Activated CD4-positive, alpha-beta T cell treated with anti-CD3 and anti-CD28 coated beads for 36 hours (primary cell): ENCODE measurements at regions of chr12 and their contacts with region 1.

Region 1: DNA sequence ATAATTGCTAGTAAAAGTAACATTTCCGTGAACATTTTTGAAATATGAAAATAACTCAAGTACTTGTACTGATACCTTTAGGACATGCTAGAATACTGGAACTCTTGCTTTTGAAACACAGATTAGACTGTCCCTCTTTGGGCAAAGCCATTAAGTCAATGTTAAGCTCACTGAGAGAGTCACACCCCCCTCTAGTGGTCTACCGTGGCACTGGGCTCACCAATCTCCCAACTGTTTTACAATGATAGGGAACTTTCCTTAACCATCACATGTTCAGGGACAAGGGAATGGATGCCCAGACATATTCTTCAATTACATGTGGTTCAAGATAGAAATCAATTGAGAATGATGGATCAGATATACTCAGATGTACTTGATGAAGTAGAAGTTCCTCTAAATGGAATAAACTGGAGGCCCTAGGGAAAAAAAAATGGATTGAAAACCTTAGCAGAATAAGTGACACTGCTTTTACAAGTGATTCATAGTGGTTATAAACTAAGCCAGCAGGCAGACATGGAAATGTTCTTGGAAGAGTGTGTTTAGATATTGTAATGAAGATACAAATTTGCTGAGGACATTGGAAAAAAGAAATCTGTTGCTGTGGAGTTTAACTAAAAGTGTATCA is 17.8 kb downstream of the NANOG start:
- DNase-seq: peak; percentile 81
- ATAC-seq: peak; percentile 66
- H3K4me3 Mint-ChIP-seq: no peak overlapping the region
- H3K27ac Mint-ChIP-seq: no peak overlapping the region
- H3K4me1 Mint-ChIP-seq: no peaks in the 10 kb centered on the region
- H3K27me3 Mint-ChIP-seq: peaks cover 2% of the 10 kb centered on the region

Region 2: GRCh38 chr12:7219599-7220243 is 587.3 kb before region 1 on chr12:
- CTCF ChIA-PET with region 1: no interaction called
- POLR2A ChIA-PET with region 1: no interaction called
- intact Hi-C with region 1: loop called in 1 of 2 experiments (anchors 2 kb)
- DNase-seq: peak; percentile 85
- ATAC-seq: peak; percentile 66
- H3K4me3 Mint-ChIP-seq: no peak overlapping the region
- H3K27ac Mint-ChIP-seq: no peak overlapping the region
- H3K4me1 Mint-ChIP-seq: no peaks in the 10 kb centered on the region
- H3K27me3 Mint-ChIP-seq: no peaks in the 10 kb centered on the region

Region 3: GRCh38 chr12:7431993-7432685 is 374.8 kb before region 1 on chr12:
- CTCF ChIA-PET with region 1: no interaction called
- POLR2A ChIA-PET with region 1: no interaction called
- intact Hi-C with region 1: no loop called
- DNase-seq: no peak
- ATAC-seq: no peak
- H3K4me3 Mint-ChIP-seq: no peak overlapping the region
- H3K27ac Mint-ChIP-seq: no peak overlapping the region
- H3K4me1 Mint-ChIP-seq: no peaks in the 10 kb centered on the region
- H3K27me3 Mint-ChIP-seq: peaks cover 3% of the 10 kb centered on the region

Region 4: GRCh38 chr12:7645394-7646177 is 161.4 kb before region 1 on chr12:
- CTCF ChIA-PET with region 1: interaction called, 55 read pairs
- POLR2A ChIA-PET with region 1: no interaction called
- intact Hi-C with region 1: loop called (anchors 1 to 10 kb)
- DNase-seq: peak; percentile 49
- ATAC-seq: no peak
- H3K4me3 Mint-ChIP-seq: no peak overlapping the region
- H3K27ac Mint-ChIP-seq: no peak overlapping the region
- H3K4me1 Mint-ChIP-seq: peaks cover 7% of the 10 kb centered on the region
- H3K27me3 Mint-ChIP-seq: no peaks in the 10 kb centered on the region

Region 5: DNA sequence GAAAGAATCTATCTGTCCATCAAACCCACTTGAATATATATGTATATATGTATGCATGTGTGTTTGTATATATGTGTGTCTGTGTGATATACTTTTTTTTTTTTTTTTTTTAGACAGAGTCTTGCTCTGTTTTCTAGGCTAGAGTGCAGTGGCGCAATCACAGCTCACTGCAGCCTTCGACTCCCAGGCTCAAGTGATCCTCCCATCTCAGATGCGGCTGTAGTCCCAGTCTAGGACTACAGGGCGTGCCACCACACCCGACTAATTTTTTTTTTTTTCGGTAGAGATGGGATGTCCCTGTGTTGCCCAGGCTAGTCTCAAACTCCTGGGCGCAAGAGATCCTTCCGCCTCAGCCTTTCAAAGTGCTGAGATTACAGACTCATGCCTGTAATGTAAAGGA is 128.2 kb before region 1 on chr12:
- CTCF ChIA-PET with region 1: interaction called, 17 read pairs
- POLR2A ChIA-PET with region 1: no interaction called
- intact Hi-C with region 1: loop called (anchors 1 kb)
- DNase-seq: no peak
- ATAC-seq: no peak
- H3K4me3 Mint-ChIP-seq: no peak overlapping the region
- H3K27ac Mint-ChIP-seq: no peak overlapping the region
- H3K4me1 Mint-ChIP-seq: peaks cover 11% of the 10 kb centered on the region
- H3K27me3 Mint-ChIP-seq: peaks cover 2% of the 10 kb centered on the region

Region 6: DNA sequence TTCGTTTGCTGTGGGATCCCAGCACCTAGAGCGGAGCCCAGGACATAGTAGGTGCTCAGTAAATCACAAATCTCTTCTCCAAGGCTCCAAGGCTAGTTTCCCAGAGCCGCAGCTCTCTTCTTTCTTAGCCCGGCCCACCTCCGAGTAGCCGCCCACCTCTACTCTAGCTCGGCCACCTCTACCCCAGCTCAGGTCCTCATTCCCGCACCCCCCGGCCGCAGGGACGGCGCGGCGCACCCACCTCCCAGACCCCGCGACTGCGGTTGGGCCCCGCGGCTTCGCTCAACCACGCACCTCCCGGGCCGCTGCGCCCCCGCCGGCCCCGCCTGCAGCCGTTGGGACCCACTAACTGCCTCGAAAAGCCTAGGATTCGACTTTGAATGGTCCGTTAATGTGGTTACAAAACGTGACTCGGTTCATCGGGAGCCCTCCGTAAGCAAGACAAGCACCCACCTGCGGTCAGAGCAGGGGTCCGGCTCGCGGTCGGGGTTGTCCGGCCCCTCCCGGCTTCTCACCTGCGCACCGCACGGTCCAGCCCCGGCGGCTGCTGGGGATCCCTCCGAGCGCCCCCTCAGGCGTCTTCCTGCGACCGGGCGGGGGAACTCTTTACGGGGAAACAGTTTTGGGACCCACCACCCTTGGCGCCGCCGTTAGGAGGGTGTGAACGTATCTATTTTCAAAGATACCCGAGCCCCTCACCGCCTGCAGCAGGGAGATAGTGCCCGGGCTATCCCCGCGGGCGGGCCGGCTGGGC is 65.8 kb after region 1 on chr12 and contains the start of gene SLC2A14:
- CTCF ChIA-PET with region 1: no interaction called
- POLR2A ChIA-PET with region 1: no interaction called
- intact Hi-C with region 1: no loop called
- DNase-seq: no peak
- ATAC-seq: no peak
- H3K4me3 Mint-ChIP-seq: no peak within 1 kb of the TSS
- H3K27ac Mint-ChIP-seq: no peak within 1 kb of the TSS
- H3K4me1 Mint-ChIP-seq: peaks cover 2% of the 10 kb centered on the region
- H3K27me3 Mint-ChIP-seq: peaks cover 23% of the 10 kb centered on the region
- total RNA-seq, gene SLC2A14: 0.19 to 0.25 TPM